Activated CD4-positive, alpha-beta T cell treated with anti-CD3 and anti-CD28 coated beads, Interleukin-2, amount 10 ng/mL, durations not matched to agents 24 days and 14 days (primary cell): ENCODE measurements at regions of chr5 and their contacts with region 1.

Region 1: DNA sequence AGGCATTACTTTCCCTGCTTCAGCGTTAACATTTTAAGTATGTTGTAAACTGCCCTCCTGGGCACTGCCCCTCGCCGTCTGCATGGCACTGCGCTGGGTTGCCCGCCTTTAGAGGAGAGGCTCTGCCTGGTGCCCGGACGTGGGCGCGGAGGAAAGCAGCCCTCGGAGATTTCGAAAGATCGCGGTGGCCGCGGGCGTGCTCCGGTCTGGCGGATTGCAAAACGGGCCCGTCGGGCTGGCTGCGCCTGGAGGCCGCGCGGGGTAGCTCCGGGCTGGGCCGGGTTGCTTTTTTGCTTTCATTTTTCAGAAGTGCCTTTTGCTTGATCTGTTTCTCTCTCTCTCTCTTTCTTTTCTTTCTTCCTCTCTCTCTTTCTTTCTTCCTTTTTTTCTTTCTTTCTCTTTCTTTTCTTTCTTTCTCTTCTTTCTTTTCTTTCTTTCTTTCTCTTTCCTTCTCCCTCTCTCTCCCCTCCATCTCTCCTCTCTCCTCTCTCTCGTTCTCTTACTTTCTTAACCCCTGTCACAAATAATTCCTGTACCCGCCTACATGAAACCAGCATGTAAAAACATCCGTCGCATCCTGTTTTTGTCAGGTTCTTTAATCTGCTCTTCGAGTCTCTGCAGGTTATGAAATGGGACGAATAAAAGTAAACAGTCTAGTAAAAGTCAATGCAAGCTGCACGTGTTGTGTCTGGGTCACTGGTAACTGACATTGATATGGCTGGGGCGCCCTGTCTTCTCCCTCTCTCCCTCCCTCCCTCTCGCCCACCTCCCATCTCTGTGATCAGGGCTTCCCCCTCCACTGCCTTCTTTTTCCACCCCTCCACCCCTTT is 1.7 kb downstream of the FST start:
- DNase-seq: peak; percentile 91
- H3K4me3 Mint-ChIP-seq: peak overlapping the region; percentile 89
- H3K27ac Mint-ChIP-seq: peak overlapping the region; percentile 84
- H3K4me1 Mint-ChIP-seq: peaks cover 32% of the 10 kb centered on the region
- H3K27me3 Mint-ChIP-seq: peaks cover 61% of the 10 kb centered on the region

Region 2: DNA sequence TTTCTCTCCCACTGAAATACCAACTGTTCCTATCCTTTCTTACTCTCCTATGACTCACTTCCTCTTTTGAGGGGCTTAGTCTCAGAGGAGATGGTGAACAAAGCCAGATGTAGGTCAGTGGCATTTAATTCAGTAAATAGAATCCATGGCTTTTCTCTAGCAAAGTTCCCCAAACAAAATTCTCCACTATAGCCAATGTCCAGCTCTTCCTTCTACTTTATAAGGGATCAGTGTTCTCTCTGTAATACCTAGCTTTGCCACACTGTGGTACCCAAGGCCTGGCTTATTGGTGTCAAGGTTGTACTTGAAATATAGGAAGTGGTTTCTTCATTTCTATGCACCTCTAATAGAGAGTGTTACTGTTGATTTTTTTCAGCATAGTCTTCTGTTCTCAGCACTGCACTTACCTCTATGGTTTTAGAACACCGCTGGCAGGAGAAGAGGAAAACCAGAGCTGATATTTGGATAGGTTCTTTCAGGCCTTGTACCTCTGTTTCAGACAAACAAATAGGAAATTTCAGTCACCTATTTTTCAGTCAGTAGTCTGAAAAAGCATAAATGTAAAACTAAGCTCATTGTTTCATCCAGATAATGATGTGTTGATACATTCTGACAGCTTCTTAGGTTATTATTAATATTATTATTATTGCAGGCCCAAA is 533.6 kb before region 1 on chr5:
- intact Hi-C with region 1: loop called (anchors 10 kb)
- DNase-seq: peak; percentile 92
- H3K4me3 Mint-ChIP-seq: no peak overlapping the region
- H3K27ac Mint-ChIP-seq: peak overlapping the region; percentile 46
- H3K4me1 Mint-ChIP-seq: peaks cover 19% of the 10 kb centered on the region
- H3K27me3 Mint-ChIP-seq: peaks cover 1% of the 10 kb centered on the region

Region 3: DNA sequence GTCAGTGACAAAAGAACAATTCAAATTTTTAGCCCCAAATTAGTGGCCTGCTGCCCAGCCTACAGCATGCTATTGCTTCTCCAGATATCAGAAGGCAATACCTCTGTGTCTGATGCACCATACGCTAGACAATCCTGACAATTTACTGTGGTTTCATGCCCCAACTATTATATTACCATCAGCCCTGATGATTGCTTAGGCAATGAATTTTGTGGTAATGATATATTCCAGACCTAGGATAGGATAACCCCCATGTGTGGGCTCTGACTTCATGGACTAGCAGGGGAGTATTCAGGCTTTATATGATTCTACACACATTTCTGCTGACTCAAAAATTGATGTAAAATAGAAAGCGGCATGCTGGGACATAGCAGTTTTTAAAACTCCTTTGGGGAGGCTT is 170.4 kb before region 1 on chr5:
- intact Hi-C with region 1: no loop called
- DNase-seq: no peak
- H3K4me3 Mint-ChIP-seq: no peak overlapping the region
- H3K27ac Mint-ChIP-seq: no peak overlapping the region
- H3K4me1 Mint-ChIP-seq: no peaks in the 10 kb centered on the region
- H3K27me3 Mint-ChIP-seq: no peaks in the 10 kb centered on the region

Region 4: GRCh38 chr5:53779541-53779981 is 297.5 kb after region 1 on chr5:
- intact Hi-C with region 1: loop called (anchors 10 kb)
- DNase-seq: peak; percentile 60
- H3K4me3 Mint-ChIP-seq: peak overlapping the region; percentile 45
- H3K27ac Mint-ChIP-seq: peak overlapping the region; percentile 62
- H3K4me1 Mint-ChIP-seq: peaks cover 22% of the 10 kb centered on the region
- H3K27me3 Mint-ChIP-seq: peaks cover 4% of the 10 kb centered on the region

Region 5: GRCh38 chr5:54217826-54218503 is 735.9 kb after region 1 on chr5:
- intact Hi-C with region 1: loop called (anchors 1 kb)
- DNase-seq: peak; percentile 74
- H3K4me3 Mint-ChIP-seq: no peak overlapping the region
- H3K27ac Mint-ChIP-seq: no peak overlapping the region
- H3K4me1 Mint-ChIP-seq: peaks cover 2% of the 10 kb centered on the region
- H3K27me3 Mint-ChIP-seq: peaks cover 2% of the 10 kb centered on the region

Region 6: GRCh38 chr5:54310433-54311175 is 828.5 kb after region 1 on chr5 and contains the start of gene ARL15:
- intact Hi-C with region 1: loop called (anchors 5 kb)
- DNase-seq: peak; percentile 99
- H3K4me3 Mint-ChIP-seq: peak within 1 kb of the TSS; percentile 88
- H3K27ac Mint-ChIP-seq: peak within 1 kb of the TSS; percentile 88
- H3K4me1 Mint-ChIP-seq: peaks cover 22% of the 10 kb centered on the region
- H3K27me3 Mint-ChIP-seq: peaks cover 18% of the 10 kb centered on the region
- total RNA-seq, gene ARL15: 4.5 and 7.4 TPM in 2 replicates

Region 7: GRCh38 chr5:54547711-54548250 is 1065.7 kb after region 1 on chr5:
- intact Hi-C with region 1: no loop called
- DNase-seq: no peak
- H3K4me3 Mint-ChIP-seq: no peak overlapping the region
- H3K27ac Mint-ChIP-seq: no peak overlapping the region
- H3K4me1 Mint-ChIP-seq: no peaks in the 10 kb centered on the region
- H3K27me3 Mint-ChIP-seq: no peaks in the 10 kb centered on the region